HepG2 (cell line): ENCODE measurements at regions of chr17 and their contacts with region 1.

Region 1: GRCh38 chr17:75877752-75878173 is 618 bp downstream of the TRIM47 start:
- DNase-seq: peak; percentile 68
- ATAC-seq: peak; percentile 54
- H3K4me3 ChIP-seq: peak overlapping the region; percentile 71 to 84 (median 84)
- H3K27ac ChIP-seq: peak overlapping the region; percentile 99
- H3K4me1 ChIP-seq: peaks cover 46% of the 10 kb centered on the region
- H3K27me3 ChIP-seq: no peaks in the 10 kb centered on the region
- CTCF ChIP-seq: peak; percentile 59; the same call in 1 of the 2 replicates
- EP300 ChIP-seq: 0 out of 4 replicates have a peak, but pooled peaks of 1 of the 2 experiments have one; percentile 22
- POLR2A ChIP-seq: no peak; a peak in 1 of 4 replicates
- RAD21 ChIP-seq: peak; percentile 90

Region 2: DNA sequence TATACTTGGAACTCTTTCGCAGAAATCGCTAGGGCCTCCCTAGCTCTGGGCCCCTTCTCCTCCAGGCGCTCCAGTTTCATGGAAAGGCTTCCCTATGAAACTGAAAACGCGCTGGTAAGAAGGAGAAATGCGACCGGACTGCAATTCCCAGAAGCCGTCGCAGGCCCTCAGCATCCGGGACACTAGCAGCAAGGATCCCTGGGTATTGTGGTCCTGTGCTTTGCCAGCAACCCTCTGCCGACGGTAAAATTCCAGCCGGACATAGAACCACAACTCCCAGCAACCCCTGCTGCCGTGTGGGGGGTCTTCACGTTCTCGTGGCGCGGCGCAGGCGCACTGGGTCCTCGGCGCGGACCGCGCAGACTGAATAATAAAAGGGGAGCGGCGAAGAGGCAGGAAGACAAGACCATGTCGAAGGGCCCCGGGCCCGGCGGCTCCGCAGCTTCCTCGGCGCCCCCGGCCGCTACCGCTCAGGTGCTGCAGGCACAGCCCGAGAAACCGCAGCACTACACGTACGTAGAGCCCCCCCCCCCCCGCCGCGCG is 93.2 kb before region 1 on chr17 and contains the start of gene UNK:
- CTCF ChIA-PET with region 1: no interaction called
- POLR2A ChIA-PET with region 1: interaction called, 81 read pairs
- in situ Hi-C with region 1: no loop called
- intact Hi-C with region 1: no loop called
- DNase-seq: peak; percentile 99
- ATAC-seq: peak; percentile 80
- H3K4me3 ChIP-seq: peak within 1 kb of the TSS; percentile 57 to 82 (median 81)
- H3K27ac ChIP-seq: peak within 1 kb of the TSS; percentile 93
- H3K4me1 ChIP-seq: peaks cover 64% of the 10 kb centered on the region
- H3K27me3 ChIP-seq: no peaks in the 10 kb centered on the region; a peak in 1 of 5 replicates
- CTCF ChIP-seq: 0 out of 2 replicates have a peak, but pooled peaks have one; percentile 11
- EP300 ChIP-seq: peak; percentile 62 to 68; a peak in 3 of 4 replicates
- POLR2A ChIP-seq: peak; percentile 63 to 82
- RAD21 ChIP-seq: peak; percentile 61
- total RNA-seq, gene UNK: 28.6 and 33.0 TPM in 2 replicates

Region 3: GRCh38 chr17:75855310-75856081 is 22.3 kb before region 1 on chr17 and contains the start of gene WBP2:
- CTCF ChIA-PET with region 1: interaction called, 3 read pairs
- POLR2A ChIA-PET with region 1: interaction called, 454 read pairs
- in situ Hi-C with region 1: no loop called
- intact Hi-C with region 1: loop called (anchors 2 kb)
- DNase-seq: peak; percentile 100
- ATAC-seq: peak; percentile 92
- H3K4me3 ChIP-seq: peak within 1 kb of the TSS; percentile 81 to 90 (median 90)
- H3K27ac ChIP-seq: peak within 1 kb of the TSS; percentile 89
- H3K4me1 ChIP-seq: peaks cover 53% of the 10 kb centered on the region
- H3K27me3 ChIP-seq: no peaks in the 10 kb centered on the region; a peak in 1 of 5 replicates
- CTCF ChIP-seq: peak; percentile 80
- EP300 ChIP-seq: peak in 1 of 2 experiments; percentile 63; a peak in 2 of 4 replicates
- POLR2A ChIP-seq: peak; percentile 89 to 99
- RAD21 ChIP-seq: peak; percentile 90
- total RNA-seq, gene WBP2: 28.2 and 29.2 TPM in 2 replicates

Region 4: GRCh38 chr17:75889454-75889853 is 11.7 kb after region 1 on chr17:
- CTCF ChIA-PET with region 1: interaction called, 5 read pairs
- POLR2A ChIA-PET with region 1: interaction called, 423 read pairs
- in situ Hi-C with region 1: no loop called
- intact Hi-C with region 1: loop called (anchors 1 kb)
- DNase-seq: no peak
- ATAC-seq: no peak
- H3K4me3 ChIP-seq: no peak overlapping the region
- H3K27ac ChIP-seq: no peak overlapping the region
- H3K4me1 ChIP-seq: peaks cover 44% of the 10 kb centered on the region
- H3K27me3 ChIP-seq: no peaks in the 10 kb centered on the region
- CTCF ChIP-seq: no peak
- EP300 ChIP-seq: no peak
- POLR2A ChIP-seq: no peak
- RAD21 ChIP-seq: no peak

Region 5: DNA sequence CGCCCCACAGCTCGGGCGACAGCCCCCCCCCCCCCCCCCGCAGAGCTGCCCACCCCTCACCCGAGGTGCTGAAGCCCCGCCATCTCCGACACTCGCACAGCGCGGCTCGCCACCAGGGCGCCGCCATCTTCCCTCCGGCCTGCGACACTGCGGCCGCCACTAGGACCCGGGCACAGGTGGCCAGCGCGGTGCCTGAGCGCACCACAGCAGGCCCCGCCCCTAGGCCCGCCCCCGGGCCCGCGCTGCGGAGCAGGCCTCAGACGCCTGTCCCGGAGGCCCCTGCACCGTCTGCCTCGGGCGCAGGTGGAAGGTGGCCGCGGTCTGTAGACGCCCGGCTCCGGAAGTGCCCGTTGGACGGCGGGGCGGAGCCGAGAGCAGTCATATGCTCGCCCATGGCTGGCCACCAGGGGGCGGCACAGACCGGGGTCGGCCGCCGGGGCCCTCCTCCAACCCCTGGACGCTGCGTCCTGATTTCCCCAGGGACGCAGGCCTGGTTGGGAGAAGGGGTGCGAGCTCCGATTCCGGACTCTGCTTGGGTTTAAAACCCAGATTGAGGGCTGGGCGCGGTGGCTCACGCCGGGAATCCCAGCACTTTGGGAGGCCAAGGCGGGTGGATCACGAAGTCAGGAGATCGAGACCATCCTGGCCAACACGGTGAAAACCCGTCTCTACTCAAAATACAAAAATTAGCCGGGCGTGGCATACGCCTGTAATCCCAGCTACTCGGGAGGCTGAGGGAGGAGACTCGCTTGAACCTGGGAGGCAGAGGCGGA is 27.2 kb after region 1 on chr17 and contains the start of gene MRPL38:
- CTCF ChIA-PET with region 1: no interaction called
- POLR2A ChIA-PET with region 1: interaction called, 66 read pairs
- in situ Hi-C with region 1: no loop called
- intact Hi-C with region 1: no loop called
- DNase-seq: peak; percentile 95
- ATAC-seq: peak; percentile 97
- H3K4me3 ChIP-seq: peak within 1 kb of the TSS; percentile 95 to 100 (median 97)
- H3K27ac ChIP-seq: peak within 1 kb of the TSS; percentile 76
- H3K4me1 ChIP-seq: peaks cover 38% of the 10 kb centered on the region
- H3K27me3 ChIP-seq: no peaks in the 10 kb centered on the region; a peak in 1 of 5 replicates
- CTCF ChIP-seq: peak; percentile 100
- EP300 ChIP-seq: peak in 1 of 2 experiments; percentile 58; a peak in 2 of 4 replicates
- POLR2A ChIP-seq: peak; percentile 75 to 86
- RAD21 ChIP-seq: peak; percentile 100
- total RNA-seq, gene MRPL38: 88.8 and 125 TPM in 2 replicates

Region 6: DNA sequence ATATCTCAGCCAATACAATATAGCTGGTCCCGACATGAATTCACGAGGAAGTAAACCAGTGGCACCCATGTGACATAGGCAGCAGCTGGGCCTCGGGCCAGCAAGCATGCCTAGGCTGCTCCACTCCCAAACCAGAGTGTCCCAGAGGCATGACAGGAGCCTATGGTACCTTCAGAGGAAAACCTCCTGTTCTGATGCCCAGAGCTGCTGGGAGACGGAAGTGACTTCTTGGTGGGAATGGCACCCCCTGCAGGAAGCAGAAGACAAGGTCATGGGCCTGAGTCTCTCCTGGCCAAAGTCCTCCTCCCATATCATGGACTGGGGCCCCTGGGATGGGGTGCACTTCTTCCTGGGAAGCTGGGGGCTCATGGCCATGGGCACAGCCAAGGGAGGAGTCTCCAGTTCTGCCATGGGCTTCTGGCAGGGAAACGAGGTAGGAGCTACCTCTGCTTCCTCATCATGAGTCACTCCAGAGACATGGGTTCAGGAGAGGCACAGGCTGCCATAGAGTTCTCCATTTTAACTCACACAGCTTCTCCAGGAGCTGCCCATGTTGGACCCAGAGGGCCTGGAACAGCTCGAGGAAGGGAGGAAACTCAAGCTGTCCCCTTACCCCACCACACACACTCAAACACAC is 49.6 kb after region 1 on chr17:
- CTCF ChIA-PET with region 1: no interaction called
- POLR2A ChIA-PET with region 1: no interaction called
- in situ Hi-C with region 1: no loop called
- intact Hi-C with region 1: no loop called
- DNase-seq: peak; percentile 52
- ATAC-seq: peak; percentile 63
- H3K4me3 ChIP-seq: no peak overlapping the region
- H3K27ac ChIP-seq: no peak overlapping the region
- H3K4me1 ChIP-seq: peaks cover 35% of the 10 kb centered on the region
- H3K27me3 ChIP-seq: no peaks in the 10 kb centered on the region
- CTCF ChIP-seq: peak; percentile 73
- EP300 ChIP-seq: no peak
- POLR2A ChIP-seq: no peak
- RAD21 ChIP-seq: peak; percentile 51

Region 7: DNA sequence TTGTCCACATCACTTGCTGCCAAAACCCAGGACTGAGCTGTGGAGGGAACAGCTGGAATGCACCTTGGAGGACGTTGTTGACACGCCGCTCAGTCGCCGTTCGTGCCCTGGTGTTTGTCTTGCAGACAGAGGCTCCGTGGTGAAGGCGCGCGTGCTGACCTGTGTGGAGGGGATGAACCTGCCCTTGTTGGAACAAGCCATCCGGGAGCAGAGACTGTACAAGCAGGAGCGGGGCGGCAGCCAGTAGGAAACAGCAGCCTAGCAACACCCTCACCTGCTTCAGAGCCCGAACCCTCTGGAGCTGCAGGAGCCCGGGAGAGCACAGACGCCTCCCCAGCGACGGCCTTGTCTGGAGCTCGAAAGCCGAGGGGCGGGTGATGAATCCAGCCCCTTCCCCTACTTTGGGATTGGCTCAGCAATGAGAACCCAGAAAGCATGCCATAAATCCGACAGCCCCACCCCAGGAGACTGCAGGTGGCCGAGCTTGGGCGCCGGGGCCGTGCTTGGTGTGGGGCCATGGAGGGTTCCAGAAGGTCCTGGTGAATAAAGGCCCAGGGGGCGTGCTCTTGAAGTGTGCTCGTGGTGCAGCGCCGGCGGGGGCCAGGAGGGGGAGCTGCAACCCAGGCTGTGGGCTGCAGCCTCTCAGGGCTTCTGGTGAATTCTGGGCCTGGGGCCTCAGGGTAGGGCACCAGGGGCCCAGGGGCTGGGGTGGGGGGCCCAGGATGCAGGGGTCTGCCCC is 122.4 kb after region 1 on chr17:
- CTCF ChIA-PET with region 1: no interaction called
- POLR2A ChIA-PET with region 1: interaction called, 40 read pairs
- in situ Hi-C with region 1: no loop called
- intact Hi-C with region 1: no loop called
- DNase-seq: peak; percentile 66
- ATAC-seq: peak; percentile 24
- H3K4me3 ChIP-seq: peak overlapping the region in 1 of 3 experiments; percentile 18; a peak in 1 of 6 replicates
- H3K27ac ChIP-seq: peak overlapping the region; percentile 50
- H3K4me1 ChIP-seq: peaks cover 100% of the 10 kb centered on the region
- H3K27me3 ChIP-seq: no peaks in the 10 kb centered on the region
- CTCF ChIP-seq: peak; percentile 92
- EP300 ChIP-seq: peak in 1 of 2 experiments; percentile 16; a peak in 1 of 4 replicates
- POLR2A ChIP-seq: no peak
- RAD21 ChIP-seq: peak; percentile 89

Region 8: DNA sequence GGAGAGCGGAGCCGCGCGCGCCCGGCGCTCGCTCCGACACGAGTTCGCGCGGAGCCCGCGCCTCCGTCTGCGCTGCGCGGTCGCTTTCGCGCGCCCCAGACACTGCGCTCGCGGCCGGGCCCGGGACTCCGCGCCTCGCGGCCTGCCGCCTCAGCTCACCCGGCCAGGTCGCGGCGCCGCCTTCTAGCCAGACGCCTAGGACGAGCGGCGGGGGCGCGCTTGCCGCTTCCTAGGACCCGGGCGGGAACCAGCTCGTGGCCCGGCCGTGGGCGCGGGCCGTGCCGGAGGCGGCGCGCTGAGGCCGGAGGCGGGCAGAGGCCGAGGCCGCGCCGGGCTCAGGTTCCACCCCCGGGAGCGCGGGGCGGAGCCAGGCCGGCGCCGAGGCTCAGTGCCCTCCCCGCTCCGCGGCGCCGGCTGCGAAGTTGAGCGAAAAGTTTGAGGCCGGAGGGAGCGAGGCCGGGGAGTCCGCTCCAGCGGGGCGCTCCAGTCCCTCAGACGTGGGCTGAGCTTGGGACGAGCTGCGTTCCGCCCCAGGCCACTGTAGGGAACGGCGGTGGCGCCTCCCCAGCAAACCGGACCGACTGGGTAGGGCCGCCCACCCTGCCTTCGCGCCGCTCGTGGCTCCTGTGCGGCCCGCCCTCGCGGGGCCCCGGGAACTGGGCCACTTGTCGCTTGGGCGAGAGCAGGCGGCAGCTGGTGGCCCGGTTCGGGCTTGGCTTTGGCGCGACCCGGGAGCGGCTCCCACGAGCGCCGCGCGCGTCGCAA is 506.6 kb after region 1 on chr17 and contains the start of gene SPHK1:
- CTCF ChIA-PET with region 1: no interaction called
- POLR2A ChIA-PET with region 1: interaction called, 10 read pairs
- in situ Hi-C with region 1: no loop called
- intact Hi-C with region 1: no loop called
- DNase-seq: peak; percentile 74
- ATAC-seq: peak; percentile 49
- H3K4me3 ChIP-seq: peak within 1 kb of the TSS; percentile 72 to 90 (median 86)
- H3K27ac ChIP-seq: peak within 1 kb of the TSS; percentile 100
- H3K4me1 ChIP-seq: peaks cover 55% of the 10 kb centered on the region
- H3K27me3 ChIP-seq: no peaks in the 10 kb centered on the region; a peak in 1 of 5 replicates
- CTCF ChIP-seq: no peak; the same call in none of the 2 replicates
- EP300 ChIP-seq: 0 out of 4 replicates have a peak, but pooled peaks of 1 of the 2 experiments have one; percentile 3
- POLR2A ChIP-seq: peak in 1 of 2 experiments; percentile 92; a peak in 2 of 4 replicates
- RAD21 ChIP-seq: peak; percentile 65; the same call in 1 of the 2 replicates
- total RNA-seq, gene SPHK1: 111 and 160 TPM in 2 replicates